Posterior vena cava (tissue), 2 donors: ENCODE measurements at regions of chr9 and their contacts with region 1.

Region 1: DNA sequence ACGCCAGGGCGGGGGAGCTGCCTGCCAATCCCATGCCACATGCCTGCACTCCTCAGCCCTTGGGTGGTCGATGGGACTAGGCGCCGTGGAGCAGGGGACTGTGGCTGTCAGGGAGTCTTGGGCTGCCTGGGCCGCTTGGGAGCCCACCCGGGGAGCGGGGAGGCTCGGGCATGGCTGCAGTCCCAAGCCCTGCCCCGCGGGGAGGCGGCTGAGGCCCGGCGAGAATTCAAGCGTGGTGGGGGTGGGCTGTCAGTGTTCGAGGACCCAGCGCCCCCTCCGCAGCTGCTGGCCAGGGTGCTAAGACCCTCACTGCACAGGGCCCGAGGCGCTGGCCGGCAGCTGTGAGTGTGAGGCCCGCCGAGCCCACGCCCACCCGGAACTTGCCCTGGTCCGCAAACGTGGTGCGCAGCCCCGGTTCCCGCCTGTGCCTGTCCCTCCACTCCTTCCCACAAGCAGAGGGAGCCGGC is 83.2 kb upstream of the DMRTA1 start:
- DNase-seq: peak; percentile 78

Region 2: GRCh38 chr9:22257026-22257425 is 106.4 kb before region 1 on chr9:
- intact Hi-C with region 1: no loop called
- DNase-seq: no peak

Region 3: DNA sequence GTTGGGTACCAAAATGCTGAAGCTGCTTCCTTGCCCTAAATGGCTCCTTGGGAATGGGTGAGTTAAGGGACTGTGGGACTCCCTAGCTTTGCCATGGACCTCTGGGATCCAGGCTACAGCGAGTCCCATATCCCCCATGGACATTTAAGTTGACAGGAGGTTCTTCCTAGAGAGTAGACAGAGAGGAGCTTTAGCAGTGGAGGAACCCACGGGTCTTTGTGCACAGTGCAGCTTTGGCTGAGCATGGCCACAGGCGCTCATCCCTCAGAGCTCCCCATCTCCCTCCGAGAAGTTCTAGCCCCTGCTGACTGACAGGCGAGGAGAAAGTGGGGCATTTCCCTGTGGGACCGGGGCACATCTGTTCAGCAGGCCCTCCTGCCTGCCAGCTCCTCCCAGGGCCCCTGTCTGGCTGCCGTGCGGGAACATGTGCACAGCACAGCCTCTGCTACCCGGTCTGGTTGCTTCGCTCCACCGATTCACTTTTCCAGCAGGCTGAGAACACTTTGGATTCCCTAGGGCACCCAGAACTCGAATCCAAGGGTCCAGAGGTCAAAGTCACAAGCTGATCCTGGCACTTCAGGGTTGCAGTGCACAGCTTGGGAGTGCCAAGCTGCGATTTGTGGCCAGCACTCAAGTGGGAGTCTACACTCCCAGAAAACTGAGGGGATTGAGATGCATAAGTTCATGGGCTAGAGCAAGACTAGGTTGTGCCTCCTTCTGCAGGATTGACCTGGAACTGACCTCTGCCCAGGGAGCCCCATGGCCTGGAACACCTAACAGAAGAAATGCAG is 42.6 kb after region 1 on chr9:
- intact Hi-C with region 1: no loop called
- DNase-seq: no peak

Region 4: GRCh38 chr9:23502004-23502403 is 1138.5 kb after region 1 on chr9:
- intact Hi-C with region 1: loop called in 1 of 2 experiments (anchors 5 kb)
- DNase-seq: no peak